Lower leg skin (tissue), 4 donors: ENCODE measurements at regions of chr3 and their contacts with region 1.

Region 1: DNA sequence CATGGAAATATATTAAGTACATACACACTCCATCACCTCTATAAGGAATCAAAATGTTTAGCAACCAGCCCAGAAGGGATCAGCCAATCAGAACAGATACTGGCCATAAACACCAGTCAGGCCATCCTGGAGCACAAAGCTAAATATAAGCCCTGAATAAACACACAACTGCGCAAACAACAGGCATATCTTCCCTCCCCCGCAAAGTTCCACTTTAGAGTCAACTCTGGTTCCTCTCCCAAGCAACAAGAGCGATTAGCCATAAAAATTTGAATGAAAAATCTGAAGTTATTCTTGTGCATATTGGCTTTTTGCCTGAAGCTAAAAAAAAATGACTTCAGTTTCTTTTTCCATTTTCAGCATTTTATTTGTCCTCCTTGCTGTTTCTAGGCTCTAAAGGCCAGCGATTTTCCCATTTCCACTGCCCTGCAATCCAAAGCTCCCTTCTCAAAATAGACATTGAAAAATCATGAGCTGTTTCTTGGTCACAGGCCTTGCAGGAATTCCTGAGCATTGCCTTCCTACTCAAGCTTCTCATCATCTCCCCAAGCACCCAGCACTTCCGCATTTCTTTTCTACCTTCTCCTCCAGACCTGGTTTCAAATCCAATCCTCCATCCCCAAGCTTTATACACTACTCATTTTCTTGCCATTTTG is 247.9 kb downstream of the ZMAT3 start:
- DNase-seq: no peak
- H3K4me3 ChIP-seq: no peak overlapping the region
- CTCF ChIP-seq: no peak
- POLR2A ChIP-seq: no peak

Region 2: GRCh38 chr3:179179979-179180759 is 356.4 kb after region 1 on chr3:
- intact Hi-C with region 1: loop called (anchors 5 kb)
- DNase-seq: no peak
- H3K4me3 ChIP-seq: no peak overlapping the region
- CTCF ChIP-seq: no peak
- POLR2A ChIP-seq: no peak